ENCODE measurements at regions of chr1 and their contacts with region 1.

Region 1: GRCh38 chr1:193558491-193559028 is 372.1 kb upstream of the B3GALT2 start:
- DNase-seq: peak; percentile 72
- H3K4me3 Mint-ChIP-seq: no peak overlapping the region
- H3K27ac Mint-ChIP-seq: peak overlapping the region; percentile 10
- H3K4me1 Mint-ChIP-seq: peaks cover 28% of the 10 kb centered on the region
- H3K27me3 Mint-ChIP-seq: no peaks in the 10 kb centered on the region
- CTCF ChIP-seq: no peak

Region 2: GRCh38 chr1:193013005-193013404 is 545.6 kb before region 1 on chr1:
- CTCF ChIA-PET with region 1: no interaction called
- intact Hi-C with region 1: no loop called
- DNase-seq: no peak
- H3K4me3 Mint-ChIP-seq: no peak overlapping the region
- H3K27ac Mint-ChIP-seq: no peak overlapping the region
- H3K4me1 Mint-ChIP-seq: peaks cover 5% of the 10 kb centered on the region
- H3K27me3 Mint-ChIP-seq: no peaks in the 10 kb centered on the region
- CTCF ChIP-seq: no peak

Region 3: GRCh38 chr1:193311226-193311948 is 247.2 kb before region 1 on chr1:
- CTCF ChIA-PET with region 1: no interaction called
- intact Hi-C with region 1: no loop called
- DNase-seq: no peak
- H3K4me3 Mint-ChIP-seq: no peak overlapping the region
- H3K27ac Mint-ChIP-seq: no peak overlapping the region
- H3K4me1 Mint-ChIP-seq: peaks cover 10% of the 10 kb centered on the region
- H3K27me3 Mint-ChIP-seq: no peaks in the 10 kb centered on the region
- CTCF ChIP-seq: no peak

Region 4: GRCh38 chr1:193462629-193463320 is 95.8 kb before region 1 on chr1:
- CTCF ChIA-PET with region 1: no interaction called
- intact Hi-C with region 1: loop called (anchors 10 kb)
- DNase-seq: peak; percentile 49
- H3K4me3 Mint-ChIP-seq: no peak overlapping the region
- H3K27ac Mint-ChIP-seq: no peak overlapping the region
- H3K4me1 Mint-ChIP-seq: peaks cover 21% of the 10 kb centered on the region
- H3K27me3 Mint-ChIP-seq: no peaks in the 10 kb centered on the region
- CTCF ChIP-seq: no peak

Region 5: DNA sequence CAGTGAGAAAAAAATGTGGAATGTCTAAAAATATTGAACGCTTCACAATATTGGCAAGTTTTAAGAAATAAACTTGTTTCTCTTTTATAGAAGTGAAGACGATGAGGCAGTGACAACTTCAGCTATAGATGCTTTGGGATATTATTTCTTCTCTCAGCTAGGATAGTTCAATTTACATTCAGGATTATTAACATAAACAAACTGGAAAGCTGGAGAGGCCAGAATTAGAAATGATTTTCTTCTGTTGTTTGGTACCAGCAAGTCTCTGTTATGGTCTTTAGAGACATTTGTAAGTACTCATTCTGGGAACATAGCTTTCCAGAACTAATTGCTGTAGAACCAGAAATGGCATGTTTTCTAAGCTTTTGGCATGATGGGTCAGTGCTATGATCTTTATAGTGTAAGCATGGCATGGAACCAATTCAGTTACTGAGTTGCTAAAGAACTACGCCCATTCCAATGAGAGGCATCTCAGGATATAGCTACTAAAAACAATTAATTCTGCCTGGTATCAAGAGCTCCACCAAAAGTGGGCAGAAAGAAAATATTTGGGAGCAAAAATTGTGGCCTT is 227.4 kb after region 1 on chr1:
- CTCF ChIA-PET with region 1: no interaction called
- intact Hi-C with region 1: loop called (anchors 2 kb)
- DNase-seq: no peak
- H3K4me3 Mint-ChIP-seq: no peak overlapping the region
- H3K27ac Mint-ChIP-seq: no peak overlapping the region
- H3K4me1 Mint-ChIP-seq: peaks cover 18% of the 10 kb centered on the region
- H3K27me3 Mint-ChIP-seq: no peaks in the 10 kb centered on the region
- CTCF ChIP-seq: no peak

Measured in Calu3 (cell line).